ENCODE measurements at regions of chr11 and their contacts with region 1.

Region 1: DNA sequence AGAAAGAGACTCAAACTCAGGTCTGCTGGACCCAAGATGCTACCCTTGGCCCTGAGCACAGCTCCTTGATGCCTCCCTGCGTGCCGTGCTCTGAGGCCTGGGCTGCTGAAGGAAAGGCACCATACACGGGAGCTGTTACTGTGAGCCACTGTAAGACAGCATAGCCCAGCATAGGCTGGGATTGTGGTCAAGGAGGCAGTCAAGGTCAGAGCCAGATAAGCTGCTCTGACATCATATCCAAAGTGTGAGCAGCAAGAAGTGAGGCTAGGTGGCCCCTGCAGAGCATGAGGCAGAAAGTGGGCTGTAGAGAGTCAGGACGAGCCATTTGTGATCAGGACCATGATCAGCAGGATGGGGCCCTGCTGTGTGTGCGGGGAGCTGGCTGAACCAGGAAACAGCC is 7.7 kb downstream of the SLC22A8 start:
- DNase-seq: no peak

Region 2: DNA sequence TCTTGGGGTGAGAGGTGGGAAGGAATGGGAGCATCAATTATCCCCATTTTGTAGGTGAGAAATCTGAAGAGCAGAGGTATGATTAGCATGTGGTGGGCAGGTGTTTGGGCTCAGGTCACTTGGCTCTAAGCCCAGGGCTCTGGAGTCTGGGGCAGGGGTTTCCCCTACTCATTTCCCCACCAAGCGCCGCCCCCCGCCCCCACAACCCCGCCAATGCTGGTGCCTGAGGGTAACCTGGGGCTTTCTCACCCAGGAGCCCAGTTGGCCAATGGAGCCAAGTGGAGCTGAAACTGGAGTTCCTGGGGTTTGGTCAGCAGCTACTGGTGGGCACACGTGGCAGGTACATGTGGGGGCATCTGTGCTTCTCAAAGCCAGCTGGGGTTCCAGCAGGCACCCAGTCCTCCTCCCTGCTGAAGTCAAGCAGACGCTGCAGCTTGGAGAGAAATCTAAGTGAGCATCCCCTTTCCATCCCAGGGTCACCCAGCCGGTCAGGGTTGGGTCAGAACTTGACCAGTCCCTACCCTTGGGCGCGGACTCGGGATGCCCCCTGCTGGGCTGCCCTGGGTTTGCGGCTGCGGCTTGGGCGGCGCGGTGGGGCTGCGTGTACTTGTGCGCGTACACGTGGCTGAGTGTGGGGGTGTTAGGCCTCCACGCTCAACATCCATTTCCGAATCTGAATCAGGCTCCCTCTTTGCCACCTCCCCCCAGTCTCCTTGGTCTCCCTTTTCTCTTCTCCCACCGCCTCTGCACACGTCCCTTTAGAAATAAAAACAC is 85.1 kb before region 1 on chr11:
- in situ Hi-C with region 1: loop called (anchors 5 kb)
- DNase-seq: no peak